ENCODE measurements at regions of chr2 and their contacts with region 1.

Region 1: DNA sequence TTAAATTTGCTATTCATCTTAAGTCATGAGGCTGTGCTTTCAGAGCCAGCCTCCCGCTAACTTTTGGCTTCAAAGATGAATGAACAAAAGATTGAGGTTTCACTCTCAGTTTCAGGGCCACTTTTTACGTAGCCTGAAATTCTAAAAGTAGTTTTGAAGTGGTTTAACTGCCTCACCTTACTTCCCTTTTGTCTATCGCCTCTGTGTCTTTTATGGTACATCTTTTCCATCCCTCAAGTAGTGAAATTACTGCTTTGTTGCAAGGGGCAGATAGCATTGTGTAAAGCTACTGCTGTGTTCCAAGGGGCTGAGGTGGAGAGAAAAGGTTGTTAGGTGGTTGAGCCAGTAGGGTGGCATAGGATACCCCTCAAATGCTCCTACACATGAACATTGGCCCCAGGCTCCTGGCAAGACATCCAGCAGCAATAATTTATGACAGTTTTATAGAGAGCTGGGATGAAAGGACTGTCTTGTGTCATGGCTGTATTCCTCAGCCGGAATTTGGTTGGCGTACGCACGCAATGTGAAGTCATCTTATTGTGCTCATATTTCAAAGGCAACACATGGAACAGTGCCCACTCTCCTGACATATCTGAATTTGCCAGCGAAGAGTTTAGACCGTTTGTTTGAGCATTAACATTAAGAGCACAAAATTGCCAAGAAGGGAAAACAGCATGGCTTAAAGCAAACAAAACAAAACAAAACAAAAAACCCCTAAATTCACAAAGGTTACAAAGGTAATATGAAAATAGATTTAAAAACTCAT is 32.2 kb downstream of the QPCT start:
- DNase-seq: peak; percentile 66
- ATAC-seq: peak; percentile 83
- H3K4me3 Mint-ChIP-seq: peak overlapping the region; percentile 44
- H3K27ac Mint-ChIP-seq: peak overlapping the region; percentile 83
- H3K4me1 Mint-ChIP-seq: peaks cover 34% of the 10 kb centered on the region
- H3K27me3 Mint-ChIP-seq: peaks cover 47% of the 10 kb centered on the region

Region 2: GRCh38 chr2:36246320-36246990 is 1130.1 kb before region 1 on chr2:
- CTCF ChIA-PET with region 1: no interaction called
- POLR2A ChIA-PET with region 1: no interaction called
- intact Hi-C with region 1: loop called in 1 of 2 experiments (anchors 5 kb)
- DNase-seq: no peak
- ATAC-seq: peak; percentile 82
- H3K4me3 Mint-ChIP-seq: peak overlapping the region; percentile 54
- H3K27ac Mint-ChIP-seq: peak overlapping the region; percentile 84
- H3K4me1 Mint-ChIP-seq: peaks cover 61% of the 10 kb centered on the region
- H3K27me3 Mint-ChIP-seq: peaks cover 4% of the 10 kb centered on the region

Region 3: GRCh38 chr2:37324786-37325624 is 51.6 kb before region 1 on chr2 and contains the start of gene PRKD3:
- CTCF ChIA-PET with region 1: interaction called, 9 read pairs
- POLR2A ChIA-PET with region 1: interaction called, 3 read pairs
- intact Hi-C with region 1: loop called (anchors 1 to 2 kb)
- DNase-seq: peak; percentile 66
- ATAC-seq: peak; percentile 76
- H3K4me3 Mint-ChIP-seq: peak within 1 kb of the TSS; percentile 91
- H3K27ac Mint-ChIP-seq: peak within 1 kb of the TSS; percentile 92
- H3K4me1 Mint-ChIP-seq: peaks cover 27% of the 10 kb centered on the region
- H3K27me3 Mint-ChIP-seq: peaks cover 17% of the 10 kb centered on the region
- total RNA-seq, gene PRKD3: 17.4 to 22.8 TPM

Region 4: GRCh38 chr2:37389989-37390765 is 13.6 kb after region 1 on chr2:
- CTCF ChIA-PET with region 1: interaction called, 47 read pairs
- POLR2A ChIA-PET with region 1: interaction called, 9 read pairs
- intact Hi-C with region 1: loop called (anchors 1 kb)
- DNase-seq: peak; percentile 77
- ATAC-seq: peak; percentile 95
- H3K4me3 Mint-ChIP-seq: peak overlapping the region; percentile 30
- H3K27ac Mint-ChIP-seq: peak overlapping the region; percentile 75
- H3K4me1 Mint-ChIP-seq: no peaks in the 10 kb centered on the region
- H3K27me3 Mint-ChIP-seq: peaks cover 5% of the 10 kb centered on the region

Region 5: DNA sequence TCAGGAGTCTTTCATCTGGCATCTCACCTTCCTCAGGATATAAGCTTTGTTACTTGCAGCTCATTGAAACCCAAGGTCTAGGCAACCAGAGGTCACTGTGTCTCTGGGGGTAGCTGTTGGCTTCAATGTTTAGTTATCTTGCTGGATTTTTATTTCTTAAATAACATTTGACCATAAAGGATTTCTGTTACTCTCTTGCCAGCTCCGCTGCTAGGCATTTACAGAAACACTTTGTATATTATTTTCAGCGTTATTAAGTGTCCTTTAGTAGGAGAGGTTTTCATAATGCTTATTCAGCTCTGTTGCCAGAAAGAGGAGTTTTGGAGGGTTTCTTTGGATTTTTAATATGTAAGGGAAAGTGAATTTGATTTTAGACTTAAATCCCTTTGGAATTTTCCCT is 29.2 kb after region 1 on chr2:
- CTCF ChIA-PET with region 1: no interaction called
- POLR2A ChIA-PET with region 1: no interaction called
- intact Hi-C with region 1: no loop called
- DNase-seq: no peak
- ATAC-seq: no peak
- H3K4me3 Mint-ChIP-seq: no peak overlapping the region
- H3K27ac Mint-ChIP-seq: no peak overlapping the region
- H3K4me1 Mint-ChIP-seq: no peaks in the 10 kb centered on the region
- H3K27me3 Mint-ChIP-seq: peaks cover 2% of the 10 kb centered on the region

Region 6: DNA sequence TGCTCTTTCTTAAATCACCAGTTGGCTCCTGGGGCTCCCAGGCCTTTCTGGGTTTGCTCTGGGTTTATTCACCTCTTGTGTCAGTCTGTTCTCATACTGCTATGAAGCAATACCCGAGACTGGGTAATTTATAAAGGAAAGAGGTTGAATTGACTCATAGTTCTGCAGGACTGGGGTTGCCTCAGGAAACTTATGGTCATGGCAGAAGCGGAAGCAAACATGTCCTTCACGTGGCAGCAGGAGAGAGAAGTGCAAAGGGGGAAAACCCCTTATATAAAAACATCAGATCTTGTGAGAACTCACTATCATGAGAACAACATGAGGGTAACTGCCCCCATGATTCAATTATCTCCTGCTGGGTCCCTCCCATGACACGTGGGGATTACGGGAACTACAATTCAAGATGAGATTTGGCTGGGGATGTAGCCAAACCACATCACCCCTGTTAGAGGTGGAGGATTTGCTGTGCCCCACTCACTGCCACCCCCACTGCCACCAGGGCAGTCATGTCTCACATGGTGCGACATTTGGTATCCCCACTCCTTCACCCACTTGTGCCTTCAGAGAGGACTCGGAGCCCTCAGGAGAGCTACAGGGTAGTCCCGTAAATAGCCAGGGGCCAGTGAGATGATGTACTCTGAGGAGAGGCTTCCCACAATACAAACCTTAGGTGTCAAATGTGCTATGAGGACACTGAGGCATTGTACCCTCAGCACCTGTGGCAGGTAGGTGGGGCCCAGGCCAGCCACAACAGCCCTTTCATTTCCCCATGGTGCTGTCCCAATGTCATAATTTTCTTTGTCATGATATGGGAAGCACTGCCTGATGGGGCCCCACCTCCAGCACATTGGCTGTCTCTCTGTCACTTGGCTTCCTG is 259.1 kb after region 1 on chr2:
- CTCF ChIA-PET with region 1: no interaction called
- POLR2A ChIA-PET with region 1: no interaction called
- intact Hi-C with region 1: loop called (anchors 5 kb)
- DNase-seq: peak; percentile 85
- ATAC-seq: peak; percentile 85
- H3K4me3 Mint-ChIP-seq: peak overlapping the region; percentile 33
- H3K27ac Mint-ChIP-seq: peak overlapping the region; percentile 83
- H3K4me1 Mint-ChIP-seq: peaks cover 65% of the 10 kb centered on the region
- H3K27me3 Mint-ChIP-seq: no peaks in the 10 kb centered on the region

Region 7: DNA sequence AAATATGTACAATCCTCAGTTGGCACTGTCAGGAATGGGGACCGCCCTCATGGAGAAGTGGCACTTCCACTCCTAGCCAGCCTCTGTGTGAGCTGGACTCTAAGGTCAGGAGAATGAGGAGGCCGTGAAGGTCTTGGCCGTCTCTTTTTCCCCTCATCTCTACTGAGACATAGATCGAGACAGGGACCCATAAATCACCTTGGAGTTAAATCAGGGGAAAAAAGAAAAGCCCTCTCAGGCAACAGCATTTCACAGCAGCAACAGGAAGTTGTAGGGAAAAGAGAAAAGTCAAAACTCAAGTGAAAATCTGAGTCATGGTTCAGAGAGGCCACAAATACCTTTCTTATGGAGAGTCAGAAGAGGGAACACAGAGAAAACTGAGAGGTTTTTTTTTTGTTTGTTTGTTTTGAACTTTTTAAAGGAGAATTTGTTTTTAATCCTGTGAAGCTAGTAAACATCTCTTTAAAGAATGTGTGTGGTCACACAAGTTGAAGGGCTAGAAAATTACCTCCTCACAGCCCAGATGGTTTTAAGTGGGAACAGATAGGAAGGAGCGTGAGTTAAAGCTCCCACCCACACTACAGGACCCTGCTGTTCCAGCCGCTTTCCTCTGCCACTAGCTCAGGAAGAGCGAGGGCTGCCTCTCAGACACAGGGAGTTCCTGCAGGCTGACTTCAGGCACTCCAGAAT is 729.9 kb after region 1 on chr2:
- CTCF ChIA-PET with region 1: no interaction called
- POLR2A ChIA-PET with region 1: no interaction called
- intact Hi-C with region 1: loop called in 1 of 2 experiments (anchors 2 kb)
- DNase-seq: no peak
- ATAC-seq: peak; percentile 88
- H3K4me3 Mint-ChIP-seq: no peak overlapping the region
- H3K27ac Mint-ChIP-seq: peak overlapping the region; percentile 61
- H3K4me1 Mint-ChIP-seq: peaks cover 21% of the 10 kb centered on the region
- H3K27me3 Mint-ChIP-seq: peaks cover 33% of the 10 kb centered on the region

Measured in activated CD4-positive, alpha-beta T cell treated with anti-CD3 and anti-CD28 coated beads for 36 hours (primary cell).